ENCODE measurements at regions of chr14 and their contacts with region 1.

Region 1: GRCh38 chr14:91228112-91229004 is 16.1 kb downstream of the GPR68 start:
- DNase-seq: peak; percentile 95
- ATAC-seq: peak; percentile 87
- H3K4me3 Mint-ChIP-seq: peak overlapping the region; percentile 67
- H3K27ac Mint-ChIP-seq: peak overlapping the region; percentile 100
- H3K4me1 Mint-ChIP-seq: peaks cover 95% of the 10 kb centered on the region
- H3K27me3 Mint-ChIP-seq: no peaks in the 10 kb centered on the region

Region 2: GRCh38 chr14:91193069-91193468 is 35.3 kb before region 1 on chr14:
- CTCF ChIA-PET with region 1: interaction called, 3 read pairs
- POLR2A ChIA-PET with region 1: interaction called, 13 read pairs
- intact Hi-C with region 1: loop called (anchors 1 kb)
- DNase-seq: no peak
- ATAC-seq: no peak
- H3K4me3 Mint-ChIP-seq: no peak overlapping the region
- H3K27ac Mint-ChIP-seq: peak overlapping the region; percentile 49
- H3K4me1 Mint-ChIP-seq: peaks cover 22% of the 10 kb centered on the region
- H3K27me3 Mint-ChIP-seq: no peaks in the 10 kb centered on the region

Region 3: DNA sequence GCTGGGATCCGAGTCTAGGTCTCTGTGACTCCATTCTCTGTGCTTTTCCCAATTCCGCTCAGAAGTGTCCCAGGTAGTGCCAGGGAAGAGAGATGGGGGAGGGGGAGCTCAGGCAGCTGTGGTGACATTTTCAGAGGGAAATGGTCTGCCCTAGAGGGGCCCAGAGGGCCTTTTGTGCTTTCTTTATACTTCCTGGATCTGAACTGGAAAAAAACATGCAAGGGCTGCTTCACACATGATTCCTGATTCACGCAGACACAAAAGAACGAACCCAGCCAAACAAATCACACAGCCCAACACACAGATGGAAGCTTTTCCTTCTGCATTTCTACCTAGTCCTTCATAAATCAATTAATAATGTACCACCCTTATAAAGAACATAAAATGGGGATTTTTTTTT is 10.3 kb before region 1 on chr14:
- CTCF ChIA-PET with region 1: no interaction called
- POLR2A ChIA-PET with region 1: no interaction called
- intact Hi-C with region 1: no loop called
- DNase-seq: no peak
- ATAC-seq: no peak
- H3K4me3 Mint-ChIP-seq: no peak overlapping the region
- H3K27ac Mint-ChIP-seq: no peak overlapping the region
- H3K4me1 Mint-ChIP-seq: peaks cover 18% of the 10 kb centered on the region
- H3K27me3 Mint-ChIP-seq: no peaks in the 10 kb centered on the region

Region 4: GRCh38 chr14:91264151-91265150 is 36.1 kb after region 1 on chr14:
- CTCF ChIA-PET with region 1: interaction called, 5 read pairs
- POLR2A ChIA-PET with region 1: no interaction called
- intact Hi-C with region 1: loop called (anchors 1 to 5 kb)
- DNase-seq: no peak
- ATAC-seq: peak; percentile 44
- H3K4me3 Mint-ChIP-seq: peak overlapping the region; percentile 64
- H3K27ac Mint-ChIP-seq: peak overlapping the region; percentile 66
- H3K4me1 Mint-ChIP-seq: peaks cover 58% of the 10 kb centered on the region
- H3K27me3 Mint-ChIP-seq: no peaks in the 10 kb centered on the region

Region 5: DNA sequence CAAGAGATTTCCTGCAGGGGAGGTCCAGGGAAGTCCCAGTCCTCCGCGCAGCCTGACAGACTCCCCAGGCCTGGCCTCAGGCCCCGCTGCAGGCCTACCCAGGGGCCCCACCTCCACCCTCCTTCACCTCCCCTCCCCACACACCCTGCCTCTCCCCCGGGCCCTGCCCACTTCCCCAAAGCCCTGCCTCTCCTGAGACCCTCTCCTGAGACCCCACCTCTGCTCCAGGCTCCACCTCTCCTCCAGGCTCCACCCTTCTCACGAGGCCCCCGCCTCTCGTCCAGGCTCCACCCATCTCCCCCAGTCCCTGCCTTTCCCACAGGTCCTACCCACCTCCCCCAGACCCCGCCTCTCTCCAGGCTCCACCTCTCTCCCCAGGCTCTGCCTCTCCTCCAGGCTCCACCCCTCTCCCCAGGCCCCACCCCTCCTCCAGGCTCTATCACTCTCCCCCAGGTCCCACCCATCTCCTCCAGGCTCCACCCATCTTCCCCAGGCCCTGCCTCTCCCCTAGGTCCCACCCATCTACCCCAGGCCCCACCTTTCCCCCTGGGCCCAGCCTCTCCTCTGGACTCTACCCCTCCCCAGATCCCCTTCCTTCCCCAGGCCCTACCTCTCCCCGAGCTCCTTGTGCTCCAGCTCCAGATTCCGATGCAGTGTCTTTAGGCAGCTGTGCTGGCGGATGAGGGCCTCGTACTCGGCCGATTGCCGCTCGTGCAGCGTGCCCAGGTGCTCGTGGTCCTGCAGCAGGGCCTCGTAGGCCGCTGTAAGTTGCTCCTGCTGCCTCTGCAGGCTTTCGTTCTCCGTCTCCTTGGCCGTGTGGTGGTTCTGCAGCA is 74.9 kb after region 1 on chr14:
- CTCF ChIA-PET with region 1: no interaction called
- POLR2A ChIA-PET with region 1: no interaction called
- intact Hi-C with region 1: loop called (anchors 1 kb)
- DNase-seq: peak; percentile 97
- ATAC-seq: peak; percentile 87
- H3K4me3 Mint-ChIP-seq: peak overlapping the region; percentile 66
- H3K27ac Mint-ChIP-seq: peak overlapping the region; percentile 97
- H3K4me1 Mint-ChIP-seq: peaks cover 63% of the 10 kb centered on the region
- H3K27me3 Mint-ChIP-seq: no peaks in the 10 kb centered on the region